Caco-2 (cell line): ENCODE measurements at regions of chr11 and their contacts with region 1.

Region 1: DNA sequence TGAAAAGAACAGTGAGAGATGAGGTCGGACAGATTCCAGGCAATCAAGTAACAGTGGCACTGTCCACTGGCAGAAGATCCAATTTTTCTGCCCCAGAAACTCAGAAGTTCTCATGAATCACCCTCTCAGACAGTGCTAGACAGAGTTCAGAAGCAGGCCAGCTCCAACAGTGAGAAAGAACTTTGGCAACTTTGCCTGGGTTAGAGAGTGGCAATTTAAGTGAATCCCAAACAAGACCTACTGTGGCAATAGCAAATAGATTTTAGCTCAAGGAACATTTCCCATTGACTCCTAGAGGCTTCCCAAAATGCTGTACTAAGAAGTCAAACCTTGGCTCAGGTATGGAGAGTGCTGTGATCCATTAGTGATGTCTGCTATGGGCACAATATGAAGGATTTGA is 12.3 kb downstream of the CD44 start:
- DNase-seq: no peak
- H3K4me3 ChIP-seq: no peak overlapping the region
- H3K4me3 Mint-ChIP-seq: no peak overlapping the region
- H3K27ac Mint-ChIP-seq: peak overlapping the region; percentile 80
- H3K4me1 ChIP-seq: peaks cover 35% of the 10 kb centered on the region
- H3K4me1 Mint-ChIP-seq: peaks cover 30% of the 10 kb centered on the region
- H3K27me3 ChIP-seq: no peaks in the 10 kb centered on the region
- H3K27me3 Mint-ChIP-seq: no peaks in the 10 kb centered on the region
- CTCF ChIP-seq: no peak

Region 2: DNA sequence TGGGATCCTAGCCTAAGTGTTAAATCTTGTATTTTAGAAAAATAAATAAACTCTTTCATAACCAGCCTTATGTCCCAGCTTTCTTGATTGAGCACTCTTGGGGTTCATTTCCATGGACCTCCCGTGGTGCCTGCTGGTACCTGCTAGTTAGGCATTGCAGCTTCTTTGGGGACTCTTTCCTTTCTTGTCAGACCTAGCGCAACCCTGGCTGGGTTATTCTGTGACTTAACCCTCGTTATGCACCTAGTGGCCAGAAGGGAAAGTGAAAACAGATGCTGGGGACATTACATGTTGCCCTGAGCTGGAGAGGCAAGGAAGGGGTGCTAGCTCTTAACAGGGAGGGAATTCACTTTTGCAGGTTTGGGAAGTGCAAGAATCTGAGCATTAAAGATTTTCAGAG is 281.8 kb before region 1 on chr11:
- CTCF ChIA-PET with region 1: no interaction called
- POLR2A ChIA-PET with region 1: no interaction called
- intact Hi-C with region 1: no loop called
- DNase-seq: no peak
- H3K4me3 ChIP-seq: no peak overlapping the region
- H3K4me3 Mint-ChIP-seq: no peak overlapping the region
- H3K27ac Mint-ChIP-seq: no peak overlapping the region
- H3K4me1 ChIP-seq: no peaks in the 10 kb centered on the region
- H3K4me1 Mint-ChIP-seq: no peaks in the 10 kb centered on the region
- H3K27me3 ChIP-seq: no peaks in the 10 kb centered on the region
- H3K27me3 Mint-ChIP-seq: no peaks in the 10 kb centered on the region
- CTCF ChIP-seq: peak in 1 of 2 experiments; percentile 18

Region 3: DNA sequence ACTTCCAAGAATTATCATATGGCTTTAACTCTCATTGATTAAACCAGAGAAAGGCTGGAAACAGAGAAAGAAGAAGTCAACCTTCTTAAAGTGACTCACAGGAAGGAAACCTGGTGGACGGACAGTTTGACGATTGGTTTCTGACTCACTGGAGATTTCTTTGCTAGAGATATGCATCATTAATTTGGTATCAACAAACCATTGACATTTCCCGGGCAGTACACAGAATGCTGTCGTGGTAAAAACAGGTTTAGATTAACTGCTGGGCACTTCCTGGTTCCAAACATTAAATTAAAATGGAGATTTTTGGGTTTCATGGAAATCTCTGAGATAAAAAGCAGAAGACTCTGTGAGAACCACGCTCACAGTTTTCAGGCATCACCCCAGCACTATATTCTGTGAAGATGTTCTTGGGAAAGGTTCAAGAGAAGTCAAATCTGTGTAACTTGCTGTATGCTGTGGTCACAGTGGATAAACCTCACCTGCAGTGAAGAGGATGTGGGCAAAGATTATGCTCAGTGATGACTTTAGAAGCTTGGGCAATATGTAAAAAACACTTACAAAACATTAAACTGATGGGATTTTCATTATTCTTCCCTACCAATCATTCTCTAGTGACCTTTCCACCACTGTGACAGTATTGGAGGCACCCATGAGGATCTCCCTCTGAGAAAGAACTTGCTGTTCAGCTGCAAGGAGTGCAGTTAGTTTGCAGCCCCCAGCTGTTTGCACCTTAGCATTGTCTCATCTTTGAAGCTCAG is 73.4 kb before region 1 on chr11:
- CTCF ChIA-PET with region 1: no interaction called
- POLR2A ChIA-PET with region 1: no interaction called
- intact Hi-C with region 1: no loop called
- DNase-seq: no peak
- H3K4me3 ChIP-seq: no peak overlapping the region
- H3K4me3 Mint-ChIP-seq: no peak overlapping the region
- H3K27ac Mint-ChIP-seq: no peak overlapping the region
- H3K4me1 ChIP-seq: no peaks in the 10 kb centered on the region; the same call in 1 of the 2 replicates
- H3K4me1 Mint-ChIP-seq: no peaks in the 10 kb centered on the region
- H3K27me3 ChIP-seq: no peaks in the 10 kb centered on the region
- H3K27me3 Mint-ChIP-seq: peaks cover 2% of the 10 kb centered on the region
- CTCF ChIP-seq: no peak

Region 4: GRCh38 chr11:35173011-35173511 is 21.8 kb after region 1 on chr11:
- CTCF ChIA-PET with region 1: interaction called, 7 read pairs
- POLR2A ChIA-PET with region 1: interaction called, 5 read pairs
- intact Hi-C with region 1: loop called (anchors 1 kb)
- DNase-seq: peak; percentile 91 to 93
- H3K4me3 ChIP-seq: no peak overlapping the region
- H3K4me3 Mint-ChIP-seq: no peak overlapping the region
- H3K27ac Mint-ChIP-seq: peak overlapping the region; percentile 59
- H3K4me1 ChIP-seq: peaks cover 46% of the 10 kb centered on the region
- H3K4me1 Mint-ChIP-seq: peaks cover 16% of the 10 kb centered on the region
- H3K27me3 ChIP-seq: no peaks in the 10 kb centered on the region
- H3K27me3 Mint-ChIP-seq: no peaks in the 10 kb centered on the region
- CTCF ChIP-seq: no peak

Region 5: DNA sequence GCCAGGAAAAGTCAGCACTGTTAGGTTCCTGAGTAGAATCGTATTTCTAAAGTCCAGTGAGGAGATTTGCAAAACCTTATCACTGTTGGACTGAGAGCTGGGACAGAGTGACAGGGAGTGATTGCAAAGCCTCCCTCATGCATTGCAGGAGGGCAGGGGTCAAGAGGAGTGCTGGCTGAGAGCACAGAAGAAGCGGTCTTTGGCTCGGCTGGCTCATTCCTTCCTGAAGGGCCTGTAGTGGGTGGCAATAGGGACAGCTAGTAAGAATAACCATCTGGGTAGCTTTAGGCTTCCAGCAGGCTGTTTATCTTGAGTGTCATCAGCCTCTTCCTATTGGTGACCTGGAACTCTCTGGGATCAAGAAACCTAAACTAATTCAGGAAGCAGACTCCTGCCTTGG is 41.1 kb after region 1 on chr11:
- CTCF ChIA-PET with region 1: no interaction called
- POLR2A ChIA-PET with region 1: no interaction called
- intact Hi-C with region 1: loop called (anchors 5 kb)
- DNase-seq: peak; percentile 59 to 73
- H3K4me3 ChIP-seq: no peak overlapping the region
- H3K4me3 Mint-ChIP-seq: no peak overlapping the region
- H3K27ac Mint-ChIP-seq: peak overlapping the region; percentile 48
- H3K4me1 ChIP-seq: peaks cover 38% of the 10 kb centered on the region
- H3K4me1 Mint-ChIP-seq: peaks cover 12% of the 10 kb centered on the region
- H3K27me3 ChIP-seq: no peaks in the 10 kb centered on the region
- H3K27me3 Mint-ChIP-seq: no peaks in the 10 kb centered on the region
- CTCF ChIP-seq: no peak

Region 6: GRCh38 chr11:35237860-35238715 is 86.8 kb after region 1 on chr11:
- CTCF ChIA-PET with region 1: no interaction called
- POLR2A ChIA-PET with region 1: no interaction called
- intact Hi-C with region 1: loop called (anchors 5 kb)
- DNase-seq: peak; percentile 51 to 71
- H3K4me3 ChIP-seq: no peak overlapping the region
- H3K4me3 Mint-ChIP-seq: no peak overlapping the region
- H3K27ac Mint-ChIP-seq: peak overlapping the region; percentile 11
- H3K4me1 ChIP-seq: peaks cover 4% of the 10 kb centered on the region; the same call in 1 of the 2 replicates
- H3K4me1 Mint-ChIP-seq: peaks cover 8% of the 10 kb centered on the region
- H3K27me3 ChIP-seq: no peaks in the 10 kb centered on the region
- H3K27me3 Mint-ChIP-seq: no peaks in the 10 kb centered on the region
- CTCF ChIP-seq: peak; percentile 72 to 85

Region 7: DNA sequence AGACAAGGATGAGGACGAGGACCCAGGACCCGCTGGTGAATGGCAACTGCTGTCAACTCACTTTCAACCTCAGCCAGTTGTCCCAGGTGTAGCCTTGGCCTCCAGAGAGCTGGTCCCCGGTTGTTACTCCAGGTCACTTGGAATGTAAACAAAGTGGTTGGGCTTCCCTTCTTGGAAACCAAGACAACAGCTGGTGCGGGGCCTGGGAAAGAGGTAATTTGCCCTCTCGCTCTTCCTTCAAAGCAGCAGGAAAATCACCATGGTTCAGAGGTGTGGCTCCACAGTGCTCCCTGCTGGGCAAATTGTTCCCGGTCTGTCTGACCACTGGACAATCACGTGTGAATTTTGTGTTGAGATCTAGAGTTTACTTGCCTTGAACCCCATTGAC is 253.1 kb after region 1 on chr11:
- CTCF ChIA-PET with region 1: no interaction called
- POLR2A ChIA-PET with region 1: no interaction called
- intact Hi-C with region 1: loop called (anchors 5 kb)
- DNase-seq: peak; percentile 57 to 66
- H3K4me3 ChIP-seq: no peak overlapping the region
- H3K4me3 Mint-ChIP-seq: no peak overlapping the region
- H3K27ac Mint-ChIP-seq: no peak overlapping the region
- H3K4me1 ChIP-seq: peaks cover 34% of the 10 kb centered on the region
- H3K4me1 Mint-ChIP-seq: peaks cover 12% of the 10 kb centered on the region
- H3K27me3 ChIP-seq: no peaks in the 10 kb centered on the region; the same call in 1 of the 2 replicates
- H3K27me3 Mint-ChIP-seq: no peaks in the 10 kb centered on the region
- CTCF ChIP-seq: peak; percentile 27 to 46